HAP-1 (cell line): ENCODE measurements at regions of chr6 and their contacts with region 1.

Region 1: DNA sequence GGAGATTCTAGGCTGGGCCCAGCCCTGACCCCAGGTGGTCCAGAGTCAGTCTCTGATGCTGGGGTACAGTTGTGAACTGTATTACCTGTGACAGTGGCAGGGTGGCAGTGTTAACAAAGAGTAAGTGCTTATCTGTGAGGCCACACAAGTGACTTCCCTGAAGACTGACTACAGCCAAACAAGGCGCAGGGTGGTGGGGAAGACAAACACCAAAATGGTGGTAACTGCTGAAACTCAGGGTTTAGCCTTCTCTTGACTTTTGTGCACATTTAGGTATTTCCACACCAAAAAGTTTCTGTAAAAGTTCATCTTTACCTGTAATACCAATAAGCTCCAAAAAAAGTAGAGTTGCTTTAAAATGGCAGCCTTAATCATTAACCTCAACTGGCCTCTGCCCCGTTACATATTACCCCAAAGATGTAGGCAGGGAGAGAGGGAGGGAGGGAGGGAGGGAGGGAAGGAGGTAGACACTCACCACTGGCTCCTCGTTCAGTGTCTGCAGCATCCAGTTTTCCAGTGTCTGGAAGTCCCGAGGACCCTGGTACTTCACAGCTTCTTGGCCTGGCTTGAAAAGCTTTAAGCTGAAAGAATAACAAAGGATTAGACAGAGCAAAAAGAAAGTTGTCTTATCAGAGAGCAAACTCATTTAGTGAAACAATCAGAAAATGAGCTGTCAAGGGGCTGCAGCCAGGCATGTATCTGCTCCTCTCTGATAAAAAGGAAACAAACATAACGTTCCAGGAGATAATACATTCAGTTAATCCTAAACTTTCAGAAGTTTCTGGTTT is 11.3 kb downstream of the TXNDC5 start:
- DNase-seq: no peak
- H3K4me3 ChIP-seq: no peak overlapping the region
- H3K4me1 ChIP-seq: no peaks in the 10 kb centered on the region
- H3K27me3 ChIP-seq: no peaks in the 10 kb centered on the region

Region 2: DNA sequence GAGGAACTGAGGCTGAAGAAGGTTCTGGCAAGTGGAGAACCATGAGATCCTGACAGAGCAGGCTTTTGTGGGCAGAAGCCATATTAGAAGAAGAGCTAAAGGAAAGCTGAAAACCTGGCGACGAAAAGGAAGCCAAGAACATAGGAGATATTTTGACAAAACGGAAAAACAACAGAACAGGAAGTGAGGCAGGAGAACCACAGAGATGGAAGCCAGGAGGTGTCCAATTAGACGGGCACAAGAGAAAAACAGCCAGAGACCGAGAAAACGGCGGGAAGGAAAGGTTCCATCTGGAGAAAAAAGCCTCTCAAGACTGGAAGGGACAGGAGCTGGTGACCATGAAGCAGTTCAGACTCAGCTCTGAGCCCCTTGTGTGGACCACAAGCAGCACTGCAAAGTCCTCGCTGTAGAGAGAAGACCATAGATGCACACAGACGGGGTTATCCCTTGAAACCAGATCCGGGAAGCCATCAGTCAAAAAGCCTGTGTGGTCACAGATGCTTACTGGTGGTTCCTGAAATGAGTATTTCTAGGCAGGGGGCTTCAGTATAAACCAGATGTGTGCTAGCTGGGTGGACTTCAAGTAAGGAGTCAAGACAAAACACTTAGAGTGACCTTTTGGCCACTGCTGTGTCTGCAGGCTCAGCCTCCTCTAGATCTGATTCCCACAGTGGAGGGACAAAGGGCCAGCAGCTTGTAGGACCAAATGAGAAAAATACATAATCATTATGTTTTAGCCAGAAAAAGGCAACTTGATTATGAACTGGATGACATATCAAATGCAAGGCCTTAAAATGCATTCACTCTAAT is 617.0 kb before region 1 on chr6:
- in situ Hi-C with region 1: loop called (anchors 25 kb)
- DNase-seq: no peak
- H3K4me3 ChIP-seq: no peak overlapping the region
- H3K4me1 ChIP-seq: no peaks in the 10 kb centered on the region
- H3K27me3 ChIP-seq: no peaks in the 10 kb centered on the region

Region 3: DNA sequence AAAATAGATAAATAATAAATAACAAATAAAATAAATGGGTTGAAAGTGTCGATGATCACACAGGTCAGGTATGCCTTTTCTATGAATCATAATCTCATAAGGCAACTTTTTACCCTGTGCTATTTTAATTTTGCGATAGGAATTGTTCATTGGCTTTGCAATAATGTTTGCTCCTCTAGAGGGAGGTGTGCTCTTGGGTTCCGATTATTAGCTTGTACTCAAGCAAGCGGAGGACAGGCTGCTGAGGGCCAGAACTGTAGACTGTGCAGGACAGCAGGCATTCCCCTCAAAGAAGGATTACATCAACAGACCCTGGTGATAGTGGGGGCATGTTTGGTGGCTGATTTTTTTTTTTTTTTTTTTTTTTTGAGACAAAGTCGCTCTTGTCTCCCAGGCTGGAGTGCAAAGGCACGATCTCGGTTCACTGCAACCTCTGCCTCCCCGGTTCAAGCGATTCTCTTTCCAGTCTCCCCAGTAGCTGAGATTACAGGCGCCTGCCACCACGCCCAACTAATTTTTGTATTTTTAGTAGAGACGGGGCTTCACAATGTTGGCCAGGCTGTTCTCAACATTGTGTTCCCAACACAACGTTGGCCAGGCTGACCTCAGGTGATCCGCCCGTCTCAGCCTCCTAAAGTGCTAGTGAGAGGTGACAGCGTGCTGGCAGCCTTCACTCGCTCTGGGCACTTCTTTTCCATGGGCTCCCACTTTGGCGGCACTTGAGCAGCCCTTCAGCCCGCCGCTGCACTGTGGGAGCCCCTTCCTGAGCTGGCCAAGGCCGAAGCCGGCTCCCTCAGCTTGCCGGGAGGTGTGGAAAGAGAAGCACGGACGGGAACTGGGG is 474.1 kb before region 1 on chr6:
- in situ Hi-C with region 1: loop called (anchors 25 kb)
- DNase-seq: peak in 1 of 2 experiments; percentile 15
- H3K4me3 ChIP-seq: no peak overlapping the region
- H3K4me1 ChIP-seq: no peaks in the 10 kb centered on the region
- H3K27me3 ChIP-seq: no peaks in the 10 kb centered on the region